Ovary (tissue), 10 donors: ENCODE measurements at regions of chr18 and their contacts with region 1.

Region 1: GRCh38 chr18:67665266-67665665 is 148.7 kb upstream of the DSEL start:
- DNase-seq: no peak
- H3K4me3 ChIP-seq: no peak overlapping the region
- H3K27ac ChIP-seq: no peak overlapping the region
- H3K4me1 ChIP-seq: no peaks in the 10 kb centered on the region
- H3K27me3 ChIP-seq: no peaks in the 10 kb centered on the region
- CTCF ChIP-seq: no peak
- EP300 ChIP-seq: no peak
- POLR2A ChIP-seq: no peak

Region 2: DNA sequence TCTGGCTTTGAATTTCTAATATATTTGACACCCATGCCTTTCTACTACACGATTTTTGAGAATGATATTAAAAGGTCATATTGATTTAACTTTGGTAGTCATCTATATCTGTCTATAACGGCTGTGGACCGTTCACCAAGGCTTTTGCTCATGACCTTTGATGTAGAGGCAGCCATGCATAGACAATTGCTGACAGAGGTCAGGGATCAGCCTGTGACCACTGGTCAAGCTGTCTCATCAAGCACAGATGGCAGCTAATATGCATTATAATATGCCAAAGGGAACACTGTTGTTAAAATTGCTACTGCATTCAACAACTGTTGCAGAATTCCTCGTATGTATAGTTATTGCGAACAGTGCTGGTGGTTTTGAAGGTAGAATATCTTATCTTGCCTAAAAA is 175.1 kb after region 1 on chr18:
- intact Hi-C with region 1: loop called in 1 of 4 experiments (anchors 10 kb)
- DNase-seq: no peak
- H3K4me3 ChIP-seq: no peak overlapping the region
- H3K27ac ChIP-seq: no peak overlapping the region
- H3K4me1 ChIP-seq: no peaks in the 10 kb centered on the region
- H3K27me3 ChIP-seq: no peaks in the 10 kb centered on the region
- CTCF ChIP-seq: no peak
- EP300 ChIP-seq: no peak
- POLR2A ChIP-seq: no peak